Activated B cell treated with CpG ODN at 0.5 μM for 24 hours (primary cell): ENCODE measurements at regions of chr19 and their contacts with region 1.

Region 1: DNA sequence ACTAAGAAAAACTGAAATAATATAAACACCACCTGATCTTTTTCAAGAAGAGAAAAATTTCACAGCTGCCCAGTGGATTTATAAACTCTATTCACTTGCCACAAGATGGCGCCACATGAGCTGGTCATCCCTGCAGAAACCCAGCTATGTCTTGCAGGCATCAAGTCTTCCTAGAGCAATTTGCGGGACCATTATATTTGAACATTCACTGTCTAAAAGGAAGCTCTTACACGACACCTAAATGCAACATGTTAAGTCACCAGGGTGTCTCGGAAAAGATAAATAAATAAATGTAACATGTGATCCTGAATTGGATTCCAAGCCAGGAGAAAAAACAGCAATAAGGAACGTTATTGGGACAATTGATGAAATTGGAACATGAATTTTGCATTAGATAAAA is 20.3 kb upstream of the AKT2 start:
- DNase-seq: peak; percentile 44
- ATAC-seq: peak; percentile 69
- H3K4me3 Mint-ChIP-seq: no peak overlapping the region
- H3K27ac Mint-ChIP-seq: no peak overlapping the region
- H3K4me1 Mint-ChIP-seq: peaks cover 2% of the 10 kb centered on the region
- H3K27me3 Mint-ChIP-seq: no peaks in the 10 kb centered on the region
- CTCF ChIP-seq: no peak

Region 2: GRCh38 chr19:40139533-40140287 is 165.7 kb before region 1 on chr19:
- CTCF ChIA-PET with region 1: interaction called, 13 read pairs
- POLR2A ChIA-PET with region 1: no interaction called
- intact Hi-C with region 1: loop called (anchors 1 kb)
- DNase-seq: no peak
- ATAC-seq: peak; percentile 47
- H3K4me3 Mint-ChIP-seq: no peak overlapping the region
- H3K27ac Mint-ChIP-seq: no peak overlapping the region
- H3K4me1 Mint-ChIP-seq: peaks cover 33% of the 10 kb centered on the region
- H3K27me3 Mint-ChIP-seq: peaks cover 7% of the 10 kb centered on the region
- CTCF ChIP-seq: no peak

Region 3: GRCh38 chr19:40523322-40524047 is 218.1 kb after region 1 on chr19:
- CTCF ChIA-PET with region 1: interaction called, 8 read pairs
- POLR2A ChIA-PET with region 1: no interaction called
- intact Hi-C with region 1: loop called (anchors 5 kb)
- DNase-seq: no peak
- ATAC-seq: peak; percentile 49
- H3K4me3 Mint-ChIP-seq: no peak overlapping the region
- H3K27ac Mint-ChIP-seq: no peak overlapping the region
- H3K4me1 Mint-ChIP-seq: peaks cover 2% of the 10 kb centered on the region
- H3K27me3 Mint-ChIP-seq: peaks cover 21% of the 10 kb centered on the region
- CTCF ChIP-seq: no peak

Region 4: DNA sequence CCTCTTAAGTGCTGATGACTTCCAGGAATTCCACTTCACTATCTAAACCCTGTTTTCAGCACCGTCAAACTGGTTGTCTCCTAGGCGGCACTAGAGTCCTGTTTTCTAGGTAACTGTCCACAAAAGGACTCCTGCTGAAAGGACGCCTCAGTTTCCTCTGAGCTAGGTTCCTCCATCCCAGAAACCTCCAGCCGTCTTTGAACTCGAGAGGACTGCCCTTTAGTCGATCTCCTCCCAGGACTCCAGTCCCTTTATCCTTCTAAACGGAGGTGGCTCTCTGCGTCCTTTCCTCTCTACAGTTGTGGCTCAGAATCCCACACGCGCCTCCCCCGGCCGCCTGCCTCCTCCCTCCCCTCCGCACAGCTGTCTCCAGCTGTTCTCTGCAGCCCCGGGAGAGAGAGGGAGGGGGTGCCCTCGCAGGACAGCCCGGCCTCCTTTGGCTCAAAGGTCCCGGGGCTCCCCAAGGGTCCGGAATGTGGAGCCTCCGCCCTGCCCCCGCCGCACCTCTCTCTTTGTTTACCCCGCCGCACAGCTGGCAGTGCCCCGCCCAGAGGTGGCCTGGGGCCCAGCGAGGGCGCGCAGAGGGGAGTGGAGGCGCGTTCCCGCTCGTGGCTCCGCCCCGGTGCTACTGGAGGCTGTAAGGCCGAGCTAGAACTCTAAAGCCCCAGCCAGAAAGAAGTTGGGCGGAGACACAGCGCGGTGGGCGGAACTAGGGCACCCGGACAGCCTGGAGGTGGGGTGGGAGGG is 298.2 kb after region 1 on chr19:
- CTCF ChIA-PET with region 1: interaction called, 12 read pairs
- POLR2A ChIA-PET with region 1: interaction called, 3 read pairs
- intact Hi-C with region 1: loop called (anchors 1 kb)
- DNase-seq: peak; percentile 90
- ATAC-seq: peak; percentile 72
- H3K4me3 Mint-ChIP-seq: peak overlapping the region; percentile 85
- H3K27ac Mint-ChIP-seq: peak overlapping the region; percentile 77
- H3K4me1 Mint-ChIP-seq: peaks cover 69% of the 10 kb centered on the region
- H3K27me3 Mint-ChIP-seq: peaks cover 22% of the 10 kb centered on the region
- CTCF ChIP-seq: no peak

Region 5: DNA sequence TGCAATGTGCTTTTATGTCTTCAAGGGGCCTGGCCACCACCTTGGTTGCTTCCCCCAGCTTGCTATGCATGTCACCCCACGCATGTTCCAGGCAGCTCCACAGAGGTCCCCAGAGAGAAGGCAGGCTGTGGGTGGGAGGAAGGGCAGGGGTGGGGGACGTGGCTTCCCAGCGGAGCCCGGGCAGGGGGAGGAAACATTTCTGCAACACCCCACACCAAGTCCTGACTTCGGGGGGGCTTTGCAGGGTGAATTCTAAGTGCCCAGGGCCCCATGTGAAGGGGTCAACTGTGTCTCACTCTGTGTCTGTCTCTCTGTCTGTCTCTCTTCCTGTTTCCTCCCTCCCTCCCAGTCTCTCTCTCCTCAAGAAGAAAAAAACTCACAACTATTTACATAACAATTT is 335.3 kb after region 1 on chr19:
- CTCF ChIA-PET with region 1: interaction called, 25 read pairs
- POLR2A ChIA-PET with region 1: no interaction called
- intact Hi-C with region 1: no loop called
- DNase-seq: no peak
- ATAC-seq: peak; percentile 31
- H3K4me3 Mint-ChIP-seq: no peak overlapping the region
- H3K27ac Mint-ChIP-seq: no peak overlapping the region
- H3K4me1 Mint-ChIP-seq: peaks cover 13% of the 10 kb centered on the region
- H3K27me3 Mint-ChIP-seq: peaks cover 4% of the 10 kb centered on the region
- CTCF ChIP-seq: no peak